Heart left ventricle (tissue), 16 donors: ENCODE measurements at regions of chr18 and their contacts with region 1.

Region 1: DNA sequence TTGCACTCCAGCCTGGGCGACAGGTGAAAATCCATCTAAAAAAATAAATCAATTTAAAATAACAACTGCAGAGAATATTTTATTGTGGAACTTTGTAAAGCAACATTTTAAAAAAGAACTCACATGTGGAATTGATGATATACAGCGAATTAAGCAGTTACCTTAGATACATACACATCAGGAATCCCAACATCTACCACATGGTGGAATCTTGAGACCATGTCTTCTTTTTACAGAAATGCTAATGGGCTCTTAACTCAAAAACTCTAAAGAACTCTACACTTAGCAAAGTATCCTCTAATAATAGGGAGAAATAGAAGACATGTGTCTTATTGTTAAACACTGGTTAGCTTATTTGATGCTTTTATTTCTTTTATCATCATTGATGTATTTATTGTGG is 373.6 kb downstream of the CDH7 start:
- DNase-seq: no peak
- ATAC-seq: peak in 1 of 4 donors; percentile 43
- H3K4me3 ChIP-seq: no peak overlapping the region
- H3K27ac ChIP-seq: no peak overlapping the region
- H3K4me1 ChIP-seq: no peaks in the 10 kb centered on the region
- H3K27me3 ChIP-seq: no peaks in the 10 kb centered on the region
- CTCF ChIP-seq: peak in 10 of 12 donors; percentile 11 to 50 (median 38)
- POLR2A ChIP-seq: no peak

Region 2: DNA sequence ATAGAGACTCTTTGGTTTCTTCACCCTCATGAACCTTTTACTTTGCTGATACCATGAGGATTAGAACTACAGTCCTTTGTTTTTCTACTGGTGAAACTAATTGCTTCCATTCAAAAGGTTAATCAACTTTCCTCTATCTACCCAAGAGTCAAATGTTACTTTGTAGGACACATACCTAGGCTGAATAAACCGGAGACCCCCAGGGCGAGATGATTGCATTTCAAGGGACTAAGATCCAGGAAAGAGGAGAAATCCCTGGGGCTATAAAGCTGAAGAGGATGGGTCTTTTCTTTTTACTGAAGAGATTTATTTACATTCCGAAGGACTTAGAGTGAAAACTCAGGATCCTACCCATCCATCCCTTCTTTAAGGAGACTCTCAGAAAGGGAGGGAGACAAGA is 147.5 kb after region 1 on chr18:
- intact Hi-C with region 1: loop called in 1 of 10 experiments (anchors 10 kb)
- DNase-seq: no peak
- ATAC-seq: no peak
- H3K4me3 ChIP-seq: no peak overlapping the region
- H3K27ac ChIP-seq: no peak overlapping the region
- H3K4me1 ChIP-seq: no peaks in the 10 kb centered on the region
- H3K27me3 ChIP-seq: no peaks in the 10 kb centered on the region
- CTCF ChIP-seq: no peak
- POLR2A ChIP-seq: no peak

Region 3: GRCh38 chr18:66280470-66280869 is 156.1 kb after region 1 on chr18:
- intact Hi-C with region 1: loop called in 6 of 10 experiments (anchors 5 to 10 kb)
- DNase-seq: peak in 1 of 5 donors; percentile 8
- ATAC-seq: peak; percentile 83 to 91 (median 88)
- H3K4me3 ChIP-seq: no peak overlapping the region
- H3K27ac ChIP-seq: no peak overlapping the region
- H3K4me1 ChIP-seq: no peaks in the 10 kb centered on the region
- H3K27me3 ChIP-seq: no peaks in the 10 kb centered on the region
- CTCF ChIP-seq: peak in 8 of 12 donors; percentile 11 to 43 (median 30)
- POLR2A ChIP-seq: no peak

Region 4: GRCh38 chr18:66495844-66496243 is 371.4 kb after region 1 on chr18:
- intact Hi-C with region 1: loop called in 2 of 10 experiments (anchors 10 kb)
- DNase-seq: peak; percentile 24 to 40 (median 36)
- ATAC-seq: peak; percentile 47 to 83 (median 66)
- H3K4me3 ChIP-seq: no peak overlapping the region
- H3K27ac ChIP-seq: no peak overlapping the region
- H3K4me1 ChIP-seq: no peaks in the 10 kb centered on the region
- H3K27me3 ChIP-seq: no peaks in the 10 kb centered on the region
- CTCF ChIP-seq: peak in 10 of 12 donors; percentile 27 to 60 (median 48)
- POLR2A ChIP-seq: no peak